ENCODE measurements at regions of chr3 and their contacts with region 1.

Region 1: DNA sequence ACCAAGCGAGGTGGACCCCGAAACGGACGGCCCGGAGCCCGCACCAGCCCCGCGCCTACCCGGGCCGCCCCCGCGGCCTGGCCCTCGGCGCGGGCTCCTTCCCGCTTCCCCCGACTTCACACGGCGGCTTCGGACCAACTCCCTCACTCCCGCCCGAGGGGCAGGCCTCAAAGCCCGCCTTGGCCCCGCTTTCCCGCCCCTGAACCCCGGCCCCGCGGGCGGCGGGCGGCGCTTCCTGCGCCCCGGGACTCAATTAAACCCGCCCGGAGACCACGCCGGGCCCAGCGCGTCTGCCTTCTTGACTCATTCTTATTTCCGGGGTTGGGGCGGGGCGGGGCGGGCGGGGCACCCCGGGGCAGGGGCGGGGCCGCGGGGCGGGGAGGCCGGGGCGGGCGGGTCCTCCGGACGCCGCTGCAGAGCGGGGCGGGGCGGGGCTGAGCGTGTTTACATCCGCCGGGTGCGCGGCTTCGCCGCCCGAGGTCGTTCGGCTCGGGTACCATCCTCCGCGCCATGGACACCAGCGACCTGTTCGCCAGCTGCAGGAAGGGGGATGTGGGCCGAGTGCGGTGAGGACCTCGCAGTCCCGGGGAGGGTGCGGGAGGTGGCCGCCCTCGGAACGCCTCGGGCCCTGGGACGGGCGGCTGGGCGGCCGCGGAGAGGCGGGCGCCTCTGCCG is at the start of gene ABTB1:
- DNase-seq: peak; percentile 74 to 92 (median 87)
- ATAC-seq: peak; percentile 83
- H3K4me3 ChIP-seq: peak within 1 kb of the TSS; percentile 71 to 87
- H3K4me3 Mint-ChIP-seq: peak within 1 kb of the TSS; percentile 93
- H3K27ac ChIP-seq: peak within 1 kb of the TSS; percentile 80 to 92
- H3K27ac Mint-ChIP-seq: peak within 1 kb of the TSS; percentile 99
- H3K4me1 ChIP-seq: peaks cover 31% of the 10 kb centered on the region
- H3K4me1 Mint-ChIP-seq: peaks cover 31% of the 10 kb centered on the region
- H3K27me3 ChIP-seq: no peaks in the 10 kb centered on the region
- H3K27me3 Mint-ChIP-seq: no peaks in the 10 kb centered on the region
- CTCF ChIP-seq: no peak
- total RNA-seq, gene ABTB1: 86.0 to 88.1 TPM

Region 2: DNA sequence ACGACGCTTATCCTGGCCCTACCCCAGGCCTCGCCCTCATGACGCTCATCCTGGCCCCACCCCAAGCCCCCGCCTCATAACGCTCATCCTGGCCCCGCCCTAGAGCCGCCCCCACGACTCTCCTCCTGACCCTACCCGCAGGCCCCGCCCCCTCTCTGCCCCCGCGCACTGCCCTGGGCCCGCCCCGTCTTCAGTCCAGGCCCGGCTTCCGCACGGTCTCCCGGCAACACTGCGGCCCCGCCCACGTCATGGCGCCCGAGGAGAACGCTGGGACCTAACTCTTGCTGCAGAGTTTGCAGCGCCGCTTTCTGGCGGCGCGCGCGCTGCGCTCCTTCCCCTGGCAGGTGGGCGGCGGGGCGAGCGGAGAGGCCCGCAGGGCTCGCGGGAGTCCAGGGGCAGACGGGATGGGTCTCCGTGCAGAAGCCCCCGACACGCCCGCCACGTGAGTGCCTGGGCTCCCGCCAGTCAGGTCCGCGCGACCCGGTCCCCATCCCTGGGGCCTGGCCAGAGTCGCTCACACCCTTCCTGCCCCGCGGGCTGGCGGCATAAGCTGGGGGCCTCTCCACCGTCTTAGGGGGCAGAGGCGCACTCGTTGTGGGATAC is 1756.2 kb before region 1 on chr3:
- CTCF ChIA-PET with region 1: no interaction called
- POLR2A ChIA-PET with region 1: no interaction called
- intact Hi-C with region 1: loop called (anchors 5 to 10 kb)
- DNase-seq: peak; percentile 89 to 98 (median 94)
- ATAC-seq: peak; percentile 94
- H3K4me3 ChIP-seq: peak overlapping the region; percentile 61 to 81
- H3K4me3 Mint-ChIP-seq: peak overlapping the region; percentile 90
- H3K27ac ChIP-seq: peak overlapping the region; percentile 74 to 84
- H3K27ac Mint-ChIP-seq: peak overlapping the region; percentile 96
- H3K4me1 ChIP-seq: peaks cover 6% of the 10 kb centered on the region
- H3K4me1 Mint-ChIP-seq: peaks cover 19% of the 10 kb centered on the region
- H3K27me3 ChIP-seq: no peaks in the 10 kb centered on the region
- H3K27me3 Mint-ChIP-seq: no peaks in the 10 kb centered on the region
- CTCF ChIP-seq: peak; percentile 18

Region 3: GRCh38 chr3:126731044-126731443 is 941.6 kb before region 1 on chr3:
- CTCF ChIA-PET with region 1: no interaction called
- POLR2A ChIA-PET with region 1: no interaction called
- intact Hi-C with region 1: no loop called
- DNase-seq: peak in 1 of 9 experiments; percentile 13
- ATAC-seq: no peak
- H3K4me3 ChIP-seq: no peak overlapping the region
- H3K4me3 Mint-ChIP-seq: no peak overlapping the region
- H3K27ac ChIP-seq: no peak overlapping the region
- H3K27ac Mint-ChIP-seq: no peak overlapping the region
- H3K4me1 ChIP-seq: peaks cover 6% of the 10 kb centered on the region
- H3K4me1 Mint-ChIP-seq: peaks cover 20% of the 10 kb centered on the region
- H3K27me3 ChIP-seq: no peaks in the 10 kb centered on the region
- H3K27me3 Mint-ChIP-seq: no peaks in the 10 kb centered on the region
- CTCF ChIP-seq: no peak

Region 4: GRCh38 chr3:127574880-127575878 is 97.5 kb before region 1 on chr3:
- CTCF ChIA-PET with region 1: no interaction called
- POLR2A ChIA-PET with region 1: no interaction called
- intact Hi-C with region 1: loop called in 1 of 2 experiments (anchors 5 kb)
- DNase-seq: peak; percentile 70 to 91 (median 83)
- ATAC-seq: peak; percentile 98
- H3K4me3 ChIP-seq: no peak overlapping the region
- H3K4me3 Mint-ChIP-seq: peak overlapping the region; percentile 22
- H3K27ac ChIP-seq: peak overlapping the region in 1 of 2 experiments; percentile 43
- H3K27ac Mint-ChIP-seq: peak overlapping the region; percentile 84
- H3K4me1 ChIP-seq: peaks cover 9% of the 10 kb centered on the region
- H3K4me1 Mint-ChIP-seq: peaks cover 13% of the 10 kb centered on the region
- H3K27me3 ChIP-seq: no peaks in the 10 kb centered on the region
- H3K27me3 Mint-ChIP-seq: no peaks in the 10 kb centered on the region
- CTCF ChIP-seq: peak; percentile 90

Region 5: GRCh38 chr3:127598841-127599570 is 73.6 kb before region 1 on chr3:
- CTCF ChIA-PET with region 1: interaction called, 5 read pairs
- POLR2A ChIA-PET with region 1: interaction called, 12 read pairs
- intact Hi-C with region 1: loop called (anchors 1 kb)
- DNase-seq: no peak
- ATAC-seq: no peak
- H3K4me3 ChIP-seq: peak overlapping the region; percentile 53 to 60
- H3K4me3 Mint-ChIP-seq: peak overlapping the region; percentile 78
- H3K27ac ChIP-seq: peak overlapping the region; percentile 53 to 69
- H3K27ac Mint-ChIP-seq: peak overlapping the region; percentile 76
- H3K4me1 ChIP-seq: peaks cover 11% of the 10 kb centered on the region
- H3K4me1 Mint-ChIP-seq: peaks cover 15% of the 10 kb centered on the region
- H3K27me3 ChIP-seq: no peaks in the 10 kb centered on the region
- H3K27me3 Mint-ChIP-seq: no peaks in the 10 kb centered on the region
- CTCF ChIP-seq: no peak

Region 6: GRCh38 chr3:127639173-127640030 is 33.3 kb before region 1 on chr3:
- CTCF ChIA-PET with region 1: no interaction called
- POLR2A ChIA-PET with region 1: no interaction called
- intact Hi-C with region 1: no loop called
- DNase-seq: no peak
- ATAC-seq: no peak
- H3K4me3 ChIP-seq: no peak overlapping the region
- H3K4me3 Mint-ChIP-seq: no peak overlapping the region
- H3K27ac ChIP-seq: no peak overlapping the region
- H3K27ac Mint-ChIP-seq: no peak overlapping the region
- H3K4me1 ChIP-seq: peaks cover 7% of the 10 kb centered on the region
- H3K4me1 Mint-ChIP-seq: peaks cover 6% of the 10 kb centered on the region
- H3K27me3 ChIP-seq: no peaks in the 10 kb centered on the region
- H3K27me3 Mint-ChIP-seq: peaks cover 9% of the 10 kb centered on the region
- CTCF ChIP-seq: no peak

Region 7: GRCh38 chr3:127697551-127698240 is 25.0 kb after region 1 on chr3:
- CTCF ChIA-PET with region 1: interaction called, 10 read pairs
- POLR2A ChIA-PET with region 1: no interaction called
- intact Hi-C with region 1: no loop called
- DNase-seq: peak in 6 of 9 experiments; percentile 13 to 70 (median 46)
- ATAC-seq: peak; percentile 77
- H3K4me3 ChIP-seq: no peak overlapping the region
- H3K4me3 Mint-ChIP-seq: no peak overlapping the region
- H3K27ac ChIP-seq: no peak overlapping the region
- H3K27ac Mint-ChIP-seq: no peak overlapping the region
- H3K4me1 ChIP-seq: no peaks in the 10 kb centered on the region
- H3K4me1 Mint-ChIP-seq: peaks cover 7% of the 10 kb centered on the region
- H3K27me3 ChIP-seq: no peaks in the 10 kb centered on the region
- H3K27me3 Mint-ChIP-seq: no peaks in the 10 kb centered on the region
- CTCF ChIP-seq: no peak

Region 8: GRCh38 chr3:128123538-128124368 is 451.1 kb after region 1 on chr3 and contains the start of gene RUVBL1:
- CTCF ChIA-PET with region 1: no interaction called
- POLR2A ChIA-PET with region 1: no interaction called
- intact Hi-C with region 1: loop called in 1 of 2 experiments (anchors 5 kb)
- DNase-seq: peak; percentile 92 to 99 (median 96)
- ATAC-seq: peak; percentile 92
- H3K4me3 ChIP-seq: peak within 1 kb of the TSS; percentile 82 to 90
- H3K4me3 Mint-ChIP-seq: peak within 1 kb of the TSS; percentile 98
- H3K27ac ChIP-seq: peak within 1 kb of the TSS; percentile 86 to 96
- H3K27ac Mint-ChIP-seq: peak within 1 kb of the TSS; percentile 98
- H3K4me1 ChIP-seq: peaks cover 19% of the 10 kb centered on the region
- H3K4me1 Mint-ChIP-seq: peaks cover 27% of the 10 kb centered on the region
- H3K27me3 ChIP-seq: no peaks in the 10 kb centered on the region
- H3K27me3 Mint-ChIP-seq: no peaks in the 10 kb centered on the region
- CTCF ChIP-seq: no peak
- total RNA-seq, gene RUVBL1: 5.1 to 5.6 TPM